Naive thymus-derived CD4-positive, alpha-beta T cell (primary cell): ENCODE measurements at regions of chr16 and their contacts with region 1.

Region 1: GRCh38 chr16:28149011-28149888 is 62.5 kb downstream of the XPO6 start:
- DNase-seq: peak in 7 of 9 donors; percentile 49 to 79 (median 73)
- ATAC-seq: peak; percentile 86
- H3K4me3 ChIP-seq: no peak overlapping the region
- H3K4me3 Mint-ChIP-seq: peak overlapping the region; percentile 49 to 81 (median 69)
- H3K27ac ChIP-seq: peak overlapping the region; percentile 61
- H3K27ac Mint-ChIP-seq: peak overlapping the region; percentile 86 to 99 (median 94)
- H3K4me1 ChIP-seq: peaks cover 32 to 66% of the 10 kb centered on the region in 2 donors
- H3K4me1 Mint-ChIP-seq: peaks cover 47 to 97% (median 88%) of the 10 kb centered on the region in 7 donors
- H3K27me3 ChIP-seq: no peaks in the 10 kb centered on the region
- H3K27me3 Mint-ChIP-seq: no peaks in the 10 kb centered on the region

Region 2: GRCh38 chr16:27892881-27893280 is 256.4 kb before region 1 on chr16:
- CTCF ChIA-PET with region 1: no interaction called
- POLR2A ChIA-PET with region 1: no interaction called
- intact Hi-C with region 1: no loop called
- DNase-seq: no peak
- ATAC-seq: no peak
- H3K4me3 ChIP-seq: no peak overlapping the region
- H3K4me3 Mint-ChIP-seq: no peak overlapping the region
- H3K27ac ChIP-seq: no peak overlapping the region
- H3K27ac Mint-ChIP-seq: no peak overlapping the region
- H3K4me1 ChIP-seq: no peaks in the 10 kb centered on the region
- H3K4me1 Mint-ChIP-seq: no peaks in the 10 kb centered on the region
- H3K27me3 ChIP-seq: no peaks in the 10 kb centered on the region
- H3K27me3 Mint-ChIP-seq: peaks cover 10 to 57% (median 42%) of the 10 kb centered on the region in 5 donors

Region 3: GRCh38 chr16:28181515-28181914 is 32.3 kb after region 1 on chr16:
- CTCF ChIA-PET with region 1: interaction called, 4 read pairs
- POLR2A ChIA-PET with region 1: interaction called, 13 read pairs
- intact Hi-C with region 1: loop called in 1 of 2 experiments (anchors 1 kb)
- DNase-seq: no peak
- ATAC-seq: no peak
- H3K4me3 ChIP-seq: no peak overlapping the region
- H3K4me3 Mint-ChIP-seq: peak overlapping the region; percentile 21 to 77 (median 66)
- H3K27ac ChIP-seq: peak overlapping the region; percentile 59
- H3K27ac Mint-ChIP-seq: peak overlapping the region; percentile 62 to 96 (median 89)
- H3K4me1 ChIP-seq: peaks cover 38 to 58% of the 10 kb centered on the region in 2 donors
- H3K4me1 Mint-ChIP-seq: peaks cover 66 to 97% (median 86%) of the 10 kb centered on the region in 7 donors
- H3K27me3 ChIP-seq: no peaks in the 10 kb centered on the region
- H3K27me3 Mint-ChIP-seq: no peaks in the 10 kb centered on the region

Region 4: GRCh38 chr16:28188085-28188916 is 39.1 kb after region 1 on chr16:
- CTCF ChIA-PET with region 1: interaction called, 4 read pairs
- POLR2A ChIA-PET with region 1: interaction called, 13 read pairs
- intact Hi-C with region 1: loop called in 1 of 2 experiments (anchors 2 kb)
- DNase-seq: no peak
- ATAC-seq: peak; percentile 10
- H3K4me3 ChIP-seq: peak overlapping the region; percentile 30
- H3K4me3 Mint-ChIP-seq: peak overlapping the region; percentile 64 to 81 (median 73)
- H3K27ac ChIP-seq: peak overlapping the region; percentile 66
- H3K27ac Mint-ChIP-seq: peak overlapping the region; percentile 75 to 95 (median 90)
- H3K4me1 ChIP-seq: peaks cover 64 to 79% of the 10 kb centered on the region in 2 donors
- H3K4me1 Mint-ChIP-seq: peaks cover 74 to 97% (median 91%) of the 10 kb centered on the region in 7 donors
- H3K27me3 ChIP-seq: no peaks in the 10 kb centered on the region
- H3K27me3 Mint-ChIP-seq: no peaks in the 10 kb centered on the region